PC-3 (cell line): ENCODE measurements at regions of chr5 and their contacts with region 1.

Region 1: DNA sequence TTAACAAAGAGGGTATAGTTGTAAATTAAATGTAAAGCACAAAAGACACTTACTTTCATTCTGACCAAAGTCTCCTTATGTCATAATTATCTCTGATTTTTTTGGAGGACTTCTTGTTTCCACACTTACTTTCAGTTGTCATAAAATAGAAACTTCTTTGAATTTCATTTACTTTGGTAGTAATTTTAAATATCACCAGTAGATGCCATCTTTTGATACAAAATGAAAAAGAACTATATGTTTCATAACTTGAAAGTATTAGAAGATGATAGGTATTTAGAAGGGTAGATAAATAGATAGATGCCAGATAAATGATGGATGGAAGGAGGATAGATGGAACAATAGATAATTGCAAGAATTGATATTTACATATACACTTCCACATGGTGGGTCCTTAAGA is 1865.3 kb upstream of the CDH9 start:
- DNase-seq: peak; percentile 4
- ATAC-seq: no peak
- H3K4me3 ChIP-seq: no peak overlapping the region
- H3K27ac ChIP-seq: no peak overlapping the region
- H3K4me1 ChIP-seq: no peaks in the 10 kb centered on the region
- H3K27me3 ChIP-seq: no peaks in the 10 kb centered on the region
- CTCF ChIP-seq: peak; percentile 52

Region 2: GRCh38 chr5:28927559-28928326 is 24.1 kb after region 1 on chr5:
- CTCF ChIA-PET with region 1: no interaction called
- POLR2A ChIA-PET with region 1: no interaction called
- intact Hi-C with region 1: no loop called
- DNase-seq: no peak
- ATAC-seq: no peak
- H3K4me3 ChIP-seq: no peak overlapping the region
- H3K27ac ChIP-seq: no peak overlapping the region
- H3K4me1 ChIP-seq: no peaks in the 10 kb centered on the region
- H3K27me3 ChIP-seq: no peaks in the 10 kb centered on the region
- CTCF ChIP-seq: no peak

Region 3: DNA sequence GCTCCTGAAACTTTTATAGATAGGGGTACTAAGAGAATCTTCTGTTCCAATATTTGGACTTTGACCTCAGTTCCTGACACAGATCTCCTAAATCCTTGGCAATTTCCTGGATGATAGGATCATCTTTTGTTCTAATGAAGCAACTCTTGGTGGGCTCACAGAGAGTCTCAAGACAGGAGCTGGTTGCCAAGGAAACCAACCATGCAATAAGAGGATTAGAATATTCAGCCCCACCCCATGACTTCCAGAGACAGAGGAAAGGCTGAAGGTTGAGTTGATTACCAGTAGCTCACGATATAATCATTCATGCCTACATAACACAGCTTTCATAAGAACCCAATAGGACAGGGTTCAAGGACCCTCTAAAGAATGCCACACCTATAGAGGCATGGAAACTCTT is 239.6 kb after region 1 on chr5:
- CTCF ChIA-PET with region 1: no interaction called
- POLR2A ChIA-PET with region 1: no interaction called
- intact Hi-C with region 1: loop called (anchors 1 kb)
- DNase-seq: no peak
- ATAC-seq: no peak
- H3K4me3 ChIP-seq: no peak overlapping the region
- H3K27ac ChIP-seq: no peak overlapping the region
- H3K4me1 ChIP-seq: no peaks in the 10 kb centered on the region
- H3K27me3 ChIP-seq: no peaks in the 10 kb centered on the region
- CTCF ChIP-seq: no peak

Region 4: GRCh38 chr5:29185558-29185957 is 281.9 kb after region 1 on chr5:
- CTCF ChIA-PET with region 1: no interaction called
- POLR2A ChIA-PET with region 1: no interaction called
- intact Hi-C with region 1: no loop called
- DNase-seq: no peak
- ATAC-seq: no peak
- H3K4me3 ChIP-seq: no peak overlapping the region
- H3K27ac ChIP-seq: no peak overlapping the region
- H3K4me1 ChIP-seq: no peaks in the 10 kb centered on the region
- H3K27me3 ChIP-seq: no peaks in the 10 kb centered on the region
- CTCF ChIP-seq: no peak

Region 5: GRCh38 chr5:29218134-29218533 is 314.5 kb after region 1 on chr5:
- CTCF ChIA-PET with region 1: no interaction called
- POLR2A ChIA-PET with region 1: no interaction called
- intact Hi-C with region 1: loop called (anchors 1 kb)
- DNase-seq: peak; percentile 24
- ATAC-seq: peak; percentile 53
- H3K4me3 ChIP-seq: no peak overlapping the region
- H3K27ac ChIP-seq: no peak overlapping the region
- H3K4me1 ChIP-seq: no peaks in the 10 kb centered on the region
- H3K27me3 ChIP-seq: no peaks in the 10 kb centered on the region
- CTCF ChIP-seq: peak; percentile 41